ENCODE measurements at regions of chr9 and their contacts with region 1.

Region 1: GRCh38 chr9:110256380-110257096 is at the start of gene TXN:
- DNase-seq: peak; percentile 57
- H3K4me3 ChIP-seq: peak within 1 kb of the TSS; percentile 94
- H3K27ac ChIP-seq: peak within 1 kb of the TSS; percentile 97
- H3K27me3 ChIP-seq: no peaks in the 10 kb centered on the region
- CTCF ChIP-seq: no peak
- polyA plus RNA-seq, gene TXN: 491 and 630 TPM in 2 replicates

Region 2: DNA sequence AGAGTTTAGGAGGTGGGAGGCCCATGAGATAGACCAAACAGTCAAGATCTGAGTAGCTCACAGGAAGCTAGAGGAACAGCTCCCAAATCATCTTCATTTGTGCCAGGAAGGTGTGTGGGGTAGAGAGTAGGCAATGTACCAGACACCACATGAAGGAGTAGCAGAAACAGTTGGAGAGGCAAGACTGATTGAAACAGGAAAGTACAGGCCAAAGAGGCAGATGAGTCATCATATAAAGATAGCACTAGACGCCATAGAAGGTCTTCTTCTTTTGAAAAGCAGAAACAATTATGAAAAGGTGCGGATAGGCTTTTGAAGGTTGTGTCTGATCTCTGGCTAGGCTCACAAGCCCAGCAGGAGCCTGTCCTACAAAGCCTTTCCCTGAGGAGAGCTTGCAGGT is 539.2 kb before region 1 on chr9:
- CTCF ChIA-PET with region 1: no interaction called
- POLR2A ChIA-PET with region 1: interaction called, 11 read pairs
- DNase-seq: no peak
- H3K4me3 ChIP-seq: no peak overlapping the region
- H3K27ac ChIP-seq: no peak overlapping the region
- H3K27me3 ChIP-seq: peaks cover 8% of the 10 kb centered on the region
- CTCF ChIP-seq: no peak

Region 3: DNA sequence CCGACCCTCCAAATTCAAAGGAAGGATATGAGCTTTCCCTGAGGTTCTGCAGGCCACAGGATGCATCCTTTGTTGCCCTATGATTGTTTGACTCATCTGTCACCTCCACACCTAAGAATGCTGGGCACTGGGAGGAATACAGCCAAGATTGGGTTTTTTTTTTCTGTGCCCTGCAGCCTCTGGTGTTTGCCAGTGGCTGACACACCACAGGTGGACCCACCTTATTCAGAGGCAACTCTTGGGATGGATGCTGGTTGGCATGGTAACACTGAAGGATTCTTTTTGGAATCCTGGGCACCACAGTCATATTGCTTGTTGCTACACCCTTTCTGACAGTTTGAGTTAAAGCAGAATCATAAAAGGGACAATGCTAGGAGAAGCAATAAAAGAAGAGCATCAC is 78.2 kb before region 1 on chr9:
- CTCF ChIA-PET with region 1: no interaction called
- POLR2A ChIA-PET with region 1: no interaction called
- DNase-seq: no peak
- H3K4me3 ChIP-seq: no peak overlapping the region
- H3K27ac ChIP-seq: no peak overlapping the region
- H3K27me3 ChIP-seq: no peaks in the 10 kb centered on the region
- CTCF ChIP-seq: no peak

Region 4: DNA sequence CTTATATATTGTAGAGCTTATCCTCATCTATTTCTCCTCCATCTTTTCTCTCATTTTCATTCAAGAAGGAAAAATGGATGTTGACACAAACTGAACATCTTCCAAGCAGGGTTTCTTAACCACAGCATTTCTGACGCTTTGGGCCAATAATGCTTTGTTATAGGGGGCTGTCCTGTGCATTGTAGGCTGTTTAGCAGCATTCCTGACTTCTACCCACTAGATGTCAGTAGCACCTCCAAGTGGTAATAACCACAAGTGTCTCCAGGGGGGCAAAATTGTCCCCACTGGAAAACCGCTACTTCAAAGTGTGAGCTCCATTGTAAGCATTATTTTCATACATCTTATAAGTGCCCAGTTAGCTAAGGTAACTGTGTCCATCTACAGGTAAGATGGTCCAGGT is 83.8 kb after region 1 on chr9:
- CTCF ChIA-PET with region 1: interaction called, 11 read pairs
- POLR2A ChIA-PET with region 1: no interaction called
- DNase-seq: no peak
- H3K4me3 ChIP-seq: no peak overlapping the region
- H3K27ac ChIP-seq: no peak overlapping the region
- H3K27me3 ChIP-seq: peaks cover 2% of the 10 kb centered on the region
- CTCF ChIP-seq: peak; percentile 48

Region 5: GRCh38 chr9:110440172-110440571 is 183.6 kb after region 1 on chr9:
- CTCF ChIA-PET with region 1: no interaction called
- POLR2A ChIA-PET with region 1: interaction called, 35 read pairs
- DNase-seq: peak; percentile 84
- H3K4me3 ChIP-seq: no peak overlapping the region
- H3K27ac ChIP-seq: no peak overlapping the region
- H3K27me3 ChIP-seq: no peaks in the 10 kb centered on the region
- CTCF ChIP-seq: no peak